ENCODE measurements at regions of chr17 and their contacts with region 1.

Region 1: DNA sequence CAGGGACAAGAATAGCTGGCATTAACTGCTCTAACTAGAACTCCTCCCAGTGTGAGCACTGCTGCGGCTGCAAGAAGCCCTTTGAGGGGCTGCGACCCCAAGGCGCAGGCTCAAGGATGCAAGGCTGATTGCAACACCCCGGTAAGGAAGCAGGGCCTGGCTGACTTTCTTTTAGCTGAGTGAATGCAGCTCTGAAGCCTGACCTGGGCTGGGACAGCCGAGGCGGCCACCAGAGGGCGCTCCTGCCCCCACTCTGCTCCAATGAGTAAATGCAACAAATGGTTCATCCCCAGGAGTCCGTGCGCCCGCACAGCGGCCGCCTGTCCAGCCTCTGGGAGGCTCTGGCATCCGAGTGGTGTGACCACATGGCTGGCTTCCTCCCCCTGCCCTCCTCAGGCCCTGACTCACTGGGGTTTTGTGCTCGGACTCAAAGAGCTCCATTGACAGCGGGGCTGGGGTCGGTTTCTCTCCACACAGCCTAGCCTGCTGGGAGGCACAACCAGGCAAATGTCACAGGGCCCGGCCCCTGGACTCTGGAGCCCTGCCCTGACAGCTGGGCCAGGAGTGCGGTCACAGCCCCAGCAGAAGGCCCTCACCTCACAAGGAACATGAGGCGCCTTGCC is at the start of gene SMIM5:
- DNase-seq: peak; percentile 88
- ATAC-seq: peak; percentile 89
- H3K4me3 Mint-ChIP-seq: no peak within 1 kb of the TSS
- H3K27ac Mint-ChIP-seq: no peak within 1 kb of the TSS
- H3K4me1 Mint-ChIP-seq: no peaks in the 10 kb centered on the region
- H3K27me3 Mint-ChIP-seq: no peaks in the 10 kb centered on the region
- total RNA-seq, gene SMIM5: 0.31 TPM in 1 of 2 experiments, not detected in the other

Region 2: DNA sequence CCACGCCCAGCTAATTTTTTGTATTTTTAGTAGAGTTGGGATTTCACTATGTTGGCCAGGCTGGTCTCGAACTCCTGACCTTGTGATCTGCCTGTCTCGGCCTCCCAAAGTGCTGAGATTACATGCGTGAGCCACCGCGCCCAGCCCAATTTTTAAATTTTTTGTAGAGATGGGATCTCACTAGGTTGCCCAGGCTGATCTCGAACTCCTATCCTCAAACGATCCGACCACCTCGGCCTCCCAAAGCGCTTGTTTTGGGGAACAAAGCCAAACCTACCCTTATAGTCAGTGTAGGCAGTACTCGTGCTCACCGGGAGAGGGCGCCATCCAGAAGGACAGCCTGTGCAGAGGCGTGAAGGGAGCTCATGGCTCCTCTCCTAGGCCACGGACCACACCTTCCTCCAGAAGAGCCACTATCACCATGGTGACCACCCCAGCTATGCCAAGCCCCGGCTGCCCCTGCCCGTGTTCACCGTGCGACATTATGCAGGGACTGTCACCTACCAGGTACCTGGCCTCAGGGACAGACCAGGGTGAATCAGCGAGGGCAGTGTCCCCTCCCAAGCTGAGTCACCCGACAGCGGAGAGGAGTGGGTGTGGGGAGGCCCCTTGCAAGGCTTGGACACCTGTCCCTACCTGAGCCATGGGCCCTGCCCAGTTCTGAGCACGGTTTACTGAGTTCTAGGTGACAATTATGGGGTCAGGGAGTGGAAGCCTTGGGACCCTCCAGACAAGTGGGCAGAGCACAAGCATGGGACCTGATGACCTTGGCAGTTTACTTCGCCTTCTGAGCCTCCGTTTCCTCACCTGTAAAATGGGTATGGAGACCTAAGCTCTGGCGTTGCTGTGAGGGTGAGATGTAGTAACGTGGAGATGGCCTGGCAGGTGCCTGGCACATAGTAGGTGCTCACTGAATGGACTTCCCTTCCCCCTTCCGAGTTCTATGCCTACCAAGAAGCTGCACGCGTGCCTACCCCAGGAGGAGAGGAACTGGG is 31.6 kb before region 1 on chr17:
- CTCF ChIA-PET with region 1: interaction called, 15 read pairs
- POLR2A ChIA-PET with region 1: no interaction called
- DNase-seq: peak; percentile 78
- ATAC-seq: peak; percentile 86
- H3K4me3 Mint-ChIP-seq: no peak overlapping the region
- H3K27ac Mint-ChIP-seq: no peak overlapping the region
- H3K4me1 Mint-ChIP-seq: peaks cover 5% of the 10 kb centered on the region
- H3K27me3 Mint-ChIP-seq: no peaks in the 10 kb centered on the region

Region 3: DNA sequence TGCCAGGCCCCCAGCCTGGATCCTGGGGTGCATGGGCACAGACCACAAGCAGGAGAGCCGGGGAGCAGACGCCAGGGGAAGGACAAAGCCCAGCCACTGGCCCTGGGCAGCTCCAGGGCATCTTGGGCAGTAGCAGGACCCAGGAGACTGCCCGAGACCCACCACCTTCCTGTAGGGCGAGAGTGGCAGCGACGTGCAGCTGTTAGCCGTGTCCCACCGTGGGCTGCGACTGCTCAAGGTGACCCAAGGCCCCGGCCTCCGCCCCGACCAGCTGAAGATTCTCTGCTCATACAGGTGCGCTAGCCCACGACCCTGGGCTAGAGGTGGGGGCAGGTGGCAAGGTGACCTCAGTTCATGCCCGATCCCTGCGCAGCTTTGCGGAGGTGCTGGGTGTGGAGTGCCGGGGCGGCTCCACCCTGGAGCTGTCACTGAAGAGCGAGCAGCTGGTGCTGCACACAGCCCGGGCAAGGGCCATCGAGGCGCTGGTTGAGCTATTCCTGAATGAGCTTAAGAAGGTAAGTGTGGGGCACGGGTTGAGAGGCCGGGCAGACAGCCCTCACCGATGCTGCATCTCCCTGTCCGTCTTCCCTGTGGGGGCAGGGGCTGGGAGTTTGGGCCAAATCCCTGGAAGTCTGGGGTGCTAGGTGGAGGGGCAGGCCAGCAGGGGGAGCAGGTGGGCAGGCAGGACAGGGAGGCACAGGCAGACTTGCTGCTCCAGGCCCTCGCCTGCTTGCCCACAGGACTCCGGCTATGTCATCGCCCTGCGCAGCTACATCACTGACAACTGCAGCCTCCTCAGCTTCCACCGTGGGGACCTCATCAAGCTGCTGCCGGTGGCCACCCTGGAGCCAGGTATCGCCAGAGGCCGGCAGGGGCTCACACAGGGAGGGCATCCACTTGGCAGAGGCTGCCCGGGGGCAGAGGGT is 13.2 kb before region 1 on chr17:
- CTCF ChIA-PET with region 1: interaction called, 23 read pairs
- POLR2A ChIA-PET with region 1: no interaction called
- DNase-seq: peak; percentile 47
- ATAC-seq: peak; percentile 41
- H3K4me3 Mint-ChIP-seq: no peak overlapping the region
- H3K27ac Mint-ChIP-seq: no peak overlapping the region
- H3K4me1 Mint-ChIP-seq: no peaks in the 10 kb centered on the region
- H3K27me3 Mint-ChIP-seq: no peaks in the 10 kb centered on the region

Region 4: GRCh38 chr17:75652915-75653549 is 20.1 kb after region 1 on chr17:
- CTCF ChIA-PET with region 1: interaction called, 134 read pairs
- POLR2A ChIA-PET with region 1: interaction called, 3 read pairs
- DNase-seq: peak; percentile 60
- ATAC-seq: peak; percentile 79
- H3K4me3 Mint-ChIP-seq: no peak overlapping the region
- H3K27ac Mint-ChIP-seq: peak overlapping the region; percentile 72
- H3K4me1 Mint-ChIP-seq: peaks cover 15% of the 10 kb centered on the region
- H3K27me3 Mint-ChIP-seq: no peaks in the 10 kb centered on the region

Region 5: DNA sequence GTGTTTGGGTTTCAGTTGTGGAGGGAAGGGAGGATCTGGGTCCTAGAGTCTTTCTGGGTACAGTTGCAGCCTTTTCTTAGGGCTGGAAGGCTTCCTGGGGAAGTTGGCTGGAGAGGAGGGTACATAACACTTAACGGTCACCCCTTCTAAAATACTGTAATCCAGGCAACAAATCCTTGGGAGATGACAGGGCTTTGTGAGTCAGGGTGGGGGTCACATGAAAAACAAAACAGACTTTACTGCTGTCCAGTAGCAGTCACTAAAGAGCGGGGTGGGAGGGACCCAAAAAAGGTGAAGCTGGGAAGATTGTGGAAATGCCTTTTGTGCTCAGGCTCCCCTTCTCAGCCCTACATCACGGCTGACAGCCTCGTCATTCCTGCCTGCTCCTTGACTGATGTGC is 40.5 kb after region 1 on chr17:
- CTCF ChIA-PET with region 1: interaction called, 15 read pairs
- POLR2A ChIA-PET with region 1: no interaction called
- DNase-seq: no peak
- ATAC-seq: no peak
- H3K4me3 Mint-ChIP-seq: no peak overlapping the region
- H3K27ac Mint-ChIP-seq: no peak overlapping the region
- H3K4me1 Mint-ChIP-seq: peaks cover 17% of the 10 kb centered on the region
- H3K27me3 Mint-ChIP-seq: no peaks in the 10 kb centered on the region

Region 6: DNA sequence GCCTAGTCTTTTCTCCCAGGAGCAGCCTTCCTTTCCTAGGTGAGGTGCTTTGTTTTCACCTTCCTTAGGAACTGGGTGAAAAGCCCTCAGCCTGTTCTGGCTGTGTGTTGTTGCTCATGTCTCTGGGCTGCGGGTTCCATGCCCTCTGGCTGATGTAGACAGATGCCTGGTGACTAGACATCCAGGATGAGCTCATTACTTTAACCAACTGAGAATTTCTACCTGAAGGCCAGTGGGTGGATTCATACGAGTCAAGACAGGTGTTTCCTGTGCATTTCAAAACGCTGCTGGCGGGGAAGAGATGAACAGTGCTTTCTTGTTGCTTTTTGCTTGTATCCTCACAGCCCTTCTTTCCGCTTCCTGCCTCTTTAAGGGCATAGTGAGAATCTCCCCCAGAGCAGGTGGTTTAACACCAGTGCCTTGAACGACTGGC is 56.5 kb after region 1 on chr17:
- CTCF ChIA-PET with region 1: interaction called, 23 read pairs
- POLR2A ChIA-PET with region 1: no interaction called
- DNase-seq: peak; percentile 76
- ATAC-seq: peak; percentile 69
- H3K4me3 Mint-ChIP-seq: peak overlapping the region; percentile 37
- H3K27ac Mint-ChIP-seq: peak overlapping the region; percentile 83
- H3K4me1 Mint-ChIP-seq: peaks cover 60% of the 10 kb centered on the region
- H3K27me3 Mint-ChIP-seq: no peaks in the 10 kb centered on the region

Region 7: GRCh38 chr17:75738218-75738802 is 105.3 kb after region 1 on chr17:
- CTCF ChIA-PET with region 1: interaction called, 17 read pairs
- POLR2A ChIA-PET with region 1: no interaction called
- DNase-seq: peak; percentile 72
- ATAC-seq: peak; percentile 65
- H3K4me3 Mint-ChIP-seq: peak overlapping the region; percentile 28
- H3K27ac Mint-ChIP-seq: peak overlapping the region; percentile 89
- H3K4me1 Mint-ChIP-seq: peaks cover 13% of the 10 kb centered on the region
- H3K27me3 Mint-ChIP-seq: no peaks in the 10 kb centered on the region

Region 8: GRCh38 chr17:76141212-76142038 is 508.5 kb after region 1 on chr17 and contains the start of gene FOXJ1:
- CTCF ChIA-PET with region 1: no interaction called
- POLR2A ChIA-PET with region 1: no interaction called
- DNase-seq: peak; percentile 94
- ATAC-seq: peak; percentile 55
- H3K4me3 Mint-ChIP-seq: peak within 1 kb of the TSS; percentile 76
- H3K27ac Mint-ChIP-seq: peak within 1 kb of the TSS; percentile 97
- H3K4me1 Mint-ChIP-seq: peaks cover 72% of the 10 kb centered on the region
- H3K27me3 Mint-ChIP-seq: no peaks in the 10 kb centered on the region
- total RNA-seq, gene FOXJ1: 8.7 to 9.1 TPM